ENCODE measurements at regions of chr9 and their contacts with region 1.

Region 1: DNA sequence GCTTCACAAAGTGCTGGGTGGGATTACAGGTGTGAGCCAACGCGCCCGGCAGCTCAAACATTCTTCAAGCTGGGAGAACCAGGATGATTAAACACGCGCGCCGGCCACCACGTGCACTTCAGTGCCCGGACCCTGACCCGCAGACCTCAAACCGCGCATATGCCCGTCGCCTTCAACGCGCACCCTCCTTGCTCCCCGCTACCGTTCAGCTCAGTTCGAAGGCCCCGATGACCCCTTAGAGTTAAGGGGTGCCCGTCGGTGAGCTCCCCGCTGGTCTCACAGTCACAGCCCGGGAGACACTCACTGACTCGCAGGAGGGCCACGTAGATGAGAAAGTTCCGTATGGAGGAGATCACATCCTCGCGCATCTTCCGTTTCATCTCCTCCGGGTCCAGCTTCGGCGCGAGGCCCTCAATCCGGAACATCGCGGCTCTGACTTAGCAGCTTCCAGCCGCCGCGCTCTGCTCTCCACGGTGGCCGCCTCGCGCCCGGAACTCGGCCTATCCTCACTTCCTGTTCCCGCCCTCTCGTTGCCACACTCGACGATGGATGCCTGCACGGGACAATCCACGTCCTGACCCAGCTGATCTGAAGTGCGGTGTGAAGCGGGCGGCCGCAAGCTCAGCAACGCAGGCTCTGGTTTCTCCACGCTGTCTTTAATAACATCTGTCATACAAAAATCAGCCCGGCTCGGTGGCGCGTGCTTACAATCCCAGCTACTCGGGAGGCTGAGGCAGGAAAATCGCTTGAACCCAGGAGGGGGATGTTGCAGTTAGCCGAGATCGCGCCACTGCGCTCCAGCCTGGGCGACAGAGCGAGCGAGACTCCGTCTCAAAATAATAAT is at the start of gene TOMM5:
- DNase-seq: peak; percentile 92 to 94
- ATAC-seq: peak; percentile 98 to 100 (median 98)
- H3K4me3 ChIP-seq: peak within 1 kb of the TSS; percentile 69 to 95 (median 82)
- H3K27ac ChIP-seq: peak within 1 kb of the TSS; percentile 43 to 90 (median 80)
- H3K4me1 ChIP-seq: peaks cover 0 to 42% (median 21%) of the 10 kb centered on the region in 9 donors
- H3K27me3 ChIP-seq: peaks cover 0 to 10% (median 3%) of the 10 kb centered on the region in 7 donors
- CTCF ChIP-seq: no peak
- total RNA-seq, gene TOMM5: 45.7 to 62.9 (median 52.1) TPM

Region 2: DNA sequence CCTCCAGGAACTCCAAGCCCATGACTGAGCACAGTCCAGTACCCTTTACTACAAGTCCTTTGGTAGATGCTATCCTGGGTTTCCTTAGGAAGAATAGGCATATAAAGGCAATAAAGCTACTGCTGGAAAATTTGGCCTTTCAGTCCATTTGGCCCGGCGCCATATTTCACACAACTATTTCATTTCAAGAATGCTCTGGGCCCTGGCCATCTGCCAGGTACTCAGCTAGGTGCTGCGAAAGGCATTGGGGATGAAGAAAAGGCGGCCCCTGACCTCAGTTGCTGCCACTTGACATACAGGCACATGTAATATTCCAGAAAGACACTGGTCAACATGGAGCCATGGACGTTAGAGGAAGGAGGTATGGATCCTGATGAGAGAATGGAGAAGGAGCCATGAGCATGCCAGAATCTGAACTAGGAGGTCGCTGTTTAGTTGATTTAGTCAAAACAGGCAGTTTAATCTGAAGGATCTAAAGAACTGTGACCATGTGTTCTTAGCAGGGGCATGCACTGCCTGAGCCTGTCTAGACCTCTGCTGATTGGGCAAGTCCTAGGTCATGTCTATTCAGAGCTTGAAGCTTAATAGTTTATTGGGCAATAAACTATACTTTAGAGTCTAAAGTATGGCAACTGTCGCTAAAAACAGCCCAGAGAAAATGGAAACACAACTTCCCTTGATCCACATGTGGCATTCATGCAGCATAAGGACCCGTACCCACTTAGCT is 870.3 kb before region 1 on chr9:
- intact Hi-C with region 1: no loop called
- DNase-seq: no peak
- ATAC-seq: no peak
- H3K4me3 ChIP-seq: no peak overlapping the region
- H3K27ac ChIP-seq: no peak overlapping the region
- H3K4me1 ChIP-seq: no peaks in the 10 kb centered on the region
- H3K27me3 ChIP-seq: peaks cover 0 to 33% (median 7%) of the 10 kb centered on the region in 7 donors
- CTCF ChIP-seq: no peak

Region 3: GRCh38 chr9:37645903-37646506 is 53.7 kb after region 1 on chr9:
- intact Hi-C with region 1: loop called in 2 of 10 experiments (anchors 10 kb)
- DNase-seq: no peak
- ATAC-seq: peak in 4 of 8 donors; percentile 40 to 63 (median 55)
- H3K4me3 ChIP-seq: no peak overlapping the region
- H3K27ac ChIP-seq: no peak overlapping the region
- H3K4me1 ChIP-seq: peaks cover 0 to 15% (median 4%) of the 10 kb centered on the region in 9 donors
- H3K27me3 ChIP-seq: peaks cover 0 to 63% (median 15%) of the 10 kb centered on the region in 7 donors
- CTCF ChIP-seq: no peak

Region 4: GRCh38 chr9:37650873-37651768 is 58.8 kb after region 1 on chr9 and contains the start of gene FRMPD1:
- intact Hi-C with region 1: loop called in 2 of 10 experiments (anchors 10 kb)
- DNase-seq: peak; percentile 14 to 66
- ATAC-seq: peak; percentile 73 to 94 (median 88)
- H3K4me3 ChIP-seq: peak within 1 kb of the TSS; percentile 45 to 68 (median 64)
- H3K27ac ChIP-seq: no peak within 1 kb of the TSS
- H3K4me1 ChIP-seq: peaks cover 0 to 15% (median 7%) of the 10 kb centered on the region in 9 donors
- H3K27me3 ChIP-seq: peaks cover 5 to 77% (median 35%) of the 10 kb centered on the region in 7 donors
- CTCF ChIP-seq: peak in 1 of 9 donors; percentile 8
- total RNA-seq, gene FRMPD1: 0.38 to 1.7 (median 0.67) TPM

Region 5: DNA sequence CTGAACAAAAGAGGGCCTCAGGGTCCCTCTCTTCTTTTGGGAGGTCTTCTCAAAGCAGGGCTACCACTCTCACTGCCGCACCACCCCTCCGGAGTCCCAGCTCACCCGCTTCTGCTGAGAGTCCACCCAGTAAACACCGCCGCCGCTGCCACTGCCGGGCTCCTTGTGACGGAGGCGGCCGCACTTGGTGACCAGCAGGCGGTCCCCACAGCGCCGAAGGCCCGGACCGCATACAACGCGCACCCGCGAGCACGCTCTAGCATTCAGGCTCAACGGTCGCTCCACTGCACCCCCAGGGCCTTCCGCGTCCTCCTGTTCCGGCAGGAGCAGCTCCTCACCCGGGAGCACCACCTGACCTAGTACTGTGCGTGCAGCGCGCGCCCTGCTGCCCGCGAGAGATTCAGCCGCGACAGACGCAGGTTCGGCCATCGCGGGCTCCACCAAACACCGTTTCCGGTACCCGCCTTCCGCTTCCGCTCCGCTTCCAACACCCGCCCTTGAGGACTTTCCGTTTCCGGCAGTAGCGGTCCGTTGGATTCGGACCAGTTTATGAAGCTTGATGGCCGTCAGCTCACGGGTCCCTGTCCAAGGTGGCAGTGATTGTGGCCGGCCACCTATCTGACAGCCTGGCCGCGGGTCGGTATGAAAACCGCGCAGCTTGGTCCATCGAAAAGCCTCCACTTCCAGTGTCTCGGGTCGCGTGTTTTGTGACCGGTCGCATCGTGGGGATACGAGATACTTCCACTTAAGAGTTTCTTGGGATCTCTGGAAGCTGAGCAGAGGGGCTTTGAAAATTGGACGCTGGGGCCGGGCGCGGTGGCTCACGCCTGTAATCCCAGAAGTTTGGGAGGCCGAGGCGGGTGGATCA is 192.5 kb after region 1 on chr9 and contains the start of gene EXOSC3:
- intact Hi-C with region 1: loop called in 4 of 10 experiments (anchors 10 kb)
- DNase-seq: peak; percentile 88 to 92
- ATAC-seq: peak; percentile 94 to 98 (median 98)
- H3K4me3 ChIP-seq: peak within 1 kb of the TSS; percentile 57 to 99 (median 89)
- H3K27ac ChIP-seq: peak within 1 kb of the TSS in 9 of 10 donors; percentile 72 to 89 (median 79)
- H3K4me1 ChIP-seq: peaks cover 0 to 28% (median 25%) of the 10 kb centered on the region in 9 donors
- H3K27me3 ChIP-seq: peaks cover 0 to 14% (median 6%) of the 10 kb centered on the region in 7 donors
- CTCF ChIP-seq: peak in 3 of 9 donors; percentile 22 to 34 (median 23)
- total RNA-seq, gene EXOSC3: 7.5 to 15.2 (median 12.8) TPM